ENCODE measurements at regions of chr11 and their contacts with region 1.

Region 1: DNA sequence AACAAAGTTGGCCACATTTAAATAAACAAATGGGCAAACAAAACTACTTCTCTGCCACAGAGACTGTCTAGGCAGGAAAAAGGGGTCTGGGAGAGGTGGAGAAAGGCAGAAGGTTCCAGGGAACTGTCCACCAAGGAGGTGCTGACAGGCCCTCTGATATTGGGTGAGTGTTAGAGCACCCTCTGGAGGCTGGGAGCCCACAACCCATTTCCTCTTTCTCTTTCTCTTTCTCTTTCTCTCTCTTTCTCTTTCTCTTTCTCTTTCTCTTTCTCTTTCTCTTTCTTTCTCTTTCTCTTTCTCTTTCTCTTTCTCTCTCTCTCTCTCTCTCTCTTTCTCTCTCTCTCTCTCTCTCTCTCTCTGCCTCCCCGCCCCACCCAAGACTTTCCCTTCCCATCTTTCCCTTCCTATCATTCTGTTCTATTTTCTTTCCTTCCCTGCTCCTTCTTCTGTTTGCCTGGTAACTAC is 912.8 kb downstream of the DLG2 start:
- DNase-seq: peak; percentile 12
- ATAC-seq: peak; percentile 77
- H3K4me3 ChIP-seq: no peak overlapping the region
- H3K27ac ChIP-seq: no peak overlapping the region
- H3K4me1 ChIP-seq: no peaks in the 10 kb centered on the region
- H3K27me3 ChIP-seq: no peaks in the 10 kb centered on the region
- CTCF ChIP-seq: peak in 2 of 3 experiments; percentile 52 to 59; a peak in 4 of 6 replicates
- POLR2A ChIP-seq: no peak
- RAD21 ChIP-seq: peak; percentile 43

Region 2: GRCh38 chr11:83827940-83828554 is 886.3 kb before region 1 on chr11:
- CTCF ChIA-PET with region 1: no interaction called
- POLR2A ChIA-PET with region 1: no interaction called
- RAD21 ChIA-PET with region 1: no interaction called
- intact Hi-C with region 1: loop called (anchors 10 kb)
- DNase-seq: peak; percentile 18
- ATAC-seq: peak; percentile 84
- H3K4me3 ChIP-seq: no peak overlapping the region
- H3K27ac ChIP-seq: no peak overlapping the region
- H3K4me1 ChIP-seq: no peaks in the 10 kb centered on the region
- H3K27me3 ChIP-seq: peaks cover 6% of the 10 kb centered on the region; the same call in 1 of the 2 replicates
- CTCF ChIP-seq: peak; percentile 26 to 66 (median 43); a peak in 4 of 6 replicates
- POLR2A ChIP-seq: no peak
- RAD21 ChIP-seq: peak; percentile 55

Region 3: GRCh38 chr11:84398017-84398626 is 316.2 kb before region 1 on chr11:
- CTCF ChIA-PET with region 1: no interaction called
- POLR2A ChIA-PET with region 1: no interaction called
- RAD21 ChIA-PET with region 1: no interaction called
- intact Hi-C with region 1: no loop called
- DNase-seq: no peak
- ATAC-seq: no peak
- H3K4me3 ChIP-seq: no peak overlapping the region
- H3K27ac ChIP-seq: no peak overlapping the region
- H3K4me1 ChIP-seq: no peaks in the 10 kb centered on the region
- H3K27me3 ChIP-seq: no peaks in the 10 kb centered on the region
- CTCF ChIP-seq: no peak
- POLR2A ChIP-seq: no peak
- RAD21 ChIP-seq: no peak

Region 4: GRCh38 chr11:84558085-84558905 is 156.1 kb before region 1 on chr11:
- CTCF ChIA-PET with region 1: no interaction called
- POLR2A ChIA-PET with region 1: no interaction called
- RAD21 ChIA-PET with region 1: no interaction called
- intact Hi-C with region 1: loop called (anchors 10 kb)
- DNase-seq: peak; percentile 18
- ATAC-seq: peak; percentile 78
- H3K4me3 ChIP-seq: no peak overlapping the region
- H3K27ac ChIP-seq: no peak overlapping the region
- H3K4me1 ChIP-seq: no peaks in the 10 kb centered on the region
- H3K27me3 ChIP-seq: no peaks in the 10 kb centered on the region
- CTCF ChIP-seq: peak; percentile 25 to 79 (median 70); a peak in 5 of 6 replicates
- POLR2A ChIP-seq: no peak
- RAD21 ChIP-seq: peak; percentile 59